Esophagus muscularis mucosa (tissue), 4 donors: ENCODE measurements at regions of chr6 and their contacts with region 1.

Region 1: GRCh38 chr6:53424136-53424700 is 75.5 kb upstream of the ELOVL5 start:
- DNase-seq: no peak
- H3K4me3 ChIP-seq: no peak overlapping the region
- H3K27ac ChIP-seq: no peak overlapping the region
- H3K4me1 ChIP-seq: no peaks in the 10 kb centered on the region
- H3K27me3 ChIP-seq: no peaks in the 10 kb centered on the region
- CTCF ChIP-seq: no peak
- EP300 ChIP-seq: no peak
- POLR2A ChIP-seq: no peak

Region 2: GRCh38 chr6:53369876-53370515 is 54.2 kb before region 1 on chr6:
- intact Hi-C with region 1: loop called (anchors 5 kb)
- DNase-seq: no peak
- H3K4me3 ChIP-seq: no peak overlapping the region
- H3K27ac ChIP-seq: no peak overlapping the region
- H3K4me1 ChIP-seq: no peaks in the 10 kb centered on the region
- H3K27me3 ChIP-seq: no peaks in the 10 kb centered on the region
- CTCF ChIP-seq: no peak
- EP300 ChIP-seq: no peak
- POLR2A ChIP-seq: no peak

Region 3: DNA sequence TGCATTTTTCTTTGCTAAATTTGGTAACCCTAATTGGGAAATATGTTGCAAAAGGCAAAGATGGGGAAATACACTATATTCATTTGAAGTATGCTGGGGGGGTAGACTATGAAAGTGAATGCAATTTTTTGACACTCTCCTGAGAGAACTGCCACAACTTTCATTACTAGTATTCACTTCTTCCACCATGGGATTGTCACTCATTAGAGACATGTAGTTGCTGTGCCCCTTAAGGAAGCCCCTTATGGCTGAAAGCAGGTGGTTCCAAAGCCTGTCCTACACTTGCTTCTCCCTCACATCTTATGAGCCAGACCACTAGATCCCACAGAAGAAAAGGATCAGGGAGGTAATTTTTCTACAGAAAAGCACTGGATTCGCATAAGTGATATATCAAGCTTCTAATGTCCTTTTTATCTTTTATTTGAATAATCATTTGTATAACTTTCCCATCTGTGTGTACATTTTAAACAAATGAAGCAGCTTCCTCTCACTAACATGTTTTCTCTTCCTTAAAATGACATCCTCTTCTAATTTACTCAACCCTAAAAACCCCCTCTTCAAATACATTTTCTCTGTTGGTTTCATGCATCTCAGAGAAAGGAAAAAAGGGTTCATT is 36.9 kb after region 1 on chr6:
- intact Hi-C with region 1: no loop called
- DNase-seq: no peak
- H3K4me3 ChIP-seq: no peak overlapping the region
- H3K27ac ChIP-seq: no peak overlapping the region
- H3K4me1 ChIP-seq: peaks cover 4 to 12% (median 9%) of the 10 kb centered on the region in 4 donors
- H3K27me3 ChIP-seq: no peaks in the 10 kb centered on the region
- CTCF ChIP-seq: no peak
- EP300 ChIP-seq: no peak
- POLR2A ChIP-seq: no peak